ENCODE measurements at regions of chr6 and their contacts with region 1.

Region 1: GRCh38 chr6:80186082-80186481 is 79.6 kb downstream of the BCKDHB start:
- DNase-seq: no peak
- H3K4me3 ChIP-seq: no peak overlapping the region
- CTCF ChIP-seq: no peak

Region 2: DNA sequence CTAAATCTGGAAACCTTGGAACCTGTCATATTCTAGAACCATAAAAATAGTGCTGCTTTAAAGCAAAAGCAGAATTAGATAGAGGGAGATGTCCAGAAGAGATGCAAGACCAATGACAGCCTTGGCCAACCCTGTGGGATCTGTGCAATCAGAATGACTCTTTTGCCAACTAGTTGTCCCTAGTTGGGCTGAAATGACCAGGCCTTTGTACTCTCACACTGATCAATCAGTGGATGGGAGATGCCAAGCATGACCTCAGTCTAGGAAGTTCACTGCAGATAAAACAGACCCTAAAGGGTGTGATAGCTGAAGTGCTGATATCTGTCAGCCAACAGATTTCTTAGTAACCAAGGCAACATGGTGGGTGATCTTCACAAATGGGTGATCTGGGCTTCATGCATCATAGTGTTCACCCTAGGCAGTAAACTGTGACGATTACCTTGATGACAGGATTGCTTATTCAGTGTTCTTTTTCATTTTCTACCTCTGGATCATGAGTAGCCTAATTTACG is 27.5 kb before region 1 on chr6:
- CTCF ChIA-PET with region 1: no interaction called
- POLR2A ChIA-PET with region 1: no interaction called
- DNase-seq: no peak
- H3K4me3 ChIP-seq: no peak overlapping the region
- CTCF ChIP-seq: no peak

Region 3: GRCh38 chr6:80174900-80175572 is 11.0 kb before region 1 on chr6:
- CTCF ChIA-PET with region 1: no interaction called
- POLR2A ChIA-PET with region 1: no interaction called
- DNase-seq: peak; percentile 69
- H3K4me3 ChIP-seq: no peak overlapping the region
- CTCF ChIP-seq: no peak

Region 4: DNA sequence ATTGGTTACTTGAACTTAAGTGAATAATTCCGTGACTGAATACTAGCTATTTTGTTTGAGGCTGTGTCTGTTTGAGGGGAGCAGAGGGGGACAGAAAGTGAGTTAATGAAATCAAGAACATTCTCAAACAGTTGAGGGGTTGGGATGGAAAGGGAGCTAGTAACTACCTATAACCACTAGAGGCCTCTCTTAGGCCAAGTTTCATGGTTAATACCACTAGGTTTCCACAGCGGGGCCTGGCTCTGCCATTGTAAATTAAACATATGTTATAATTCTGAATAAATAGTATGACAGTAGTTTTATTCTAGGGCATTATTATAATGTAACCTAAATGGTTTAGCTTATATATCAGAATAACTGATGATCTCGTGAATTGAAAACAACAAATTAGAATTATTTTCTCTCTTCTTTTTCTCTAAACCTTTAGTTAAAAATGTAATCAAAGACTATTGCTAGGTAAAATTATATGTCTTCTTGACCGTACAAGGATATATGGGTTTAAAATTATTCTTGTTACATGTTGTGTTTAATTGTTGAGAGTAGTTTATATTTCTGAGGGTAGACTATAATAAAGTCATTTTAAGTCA is 28.4 kb after region 1 on chr6:
- CTCF ChIA-PET with region 1: interaction called, 10 read pairs
- POLR2A ChIA-PET with region 1: no interaction called
- DNase-seq: no peak
- H3K4me3 ChIP-seq: no peak overlapping the region
- CTCF ChIP-seq: peak; percentile 77

Measured in AG04449 (cell line).